Posterior vena cava (tissue), 2 donors: ENCODE measurements at regions of chr10 and their contacts with region 1.

Region 1: GRCh38 chr10:112177247-112177646 is 6.3 kb downstream of the GPAM start:
- DNase-seq: no peak

Region 2: DNA sequence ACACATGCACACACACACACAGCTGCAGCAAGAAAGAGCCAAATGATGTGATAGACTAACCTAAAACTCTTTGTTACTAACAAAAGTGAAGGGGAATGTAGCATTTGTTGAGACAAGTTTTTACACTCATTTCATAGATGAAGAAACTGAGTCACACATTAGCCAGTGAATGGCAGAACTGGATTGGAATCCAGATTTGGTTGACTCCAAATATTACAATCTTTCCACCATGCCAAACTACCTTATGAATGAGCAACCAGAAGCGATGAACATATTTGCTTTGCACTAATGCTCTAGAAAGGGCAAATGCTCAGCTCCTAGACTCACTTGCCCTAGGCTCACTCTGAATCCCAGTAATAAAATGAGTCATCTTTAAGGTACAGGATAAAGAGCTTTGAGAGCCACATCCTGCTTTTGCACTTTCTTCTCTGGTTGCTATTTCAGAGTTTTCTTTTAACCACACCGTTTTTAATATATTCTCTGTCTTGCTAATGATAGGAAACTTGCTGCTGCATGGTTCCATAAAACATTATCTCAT is 105.6 kb before region 1 on chr10:
- intact Hi-C with region 1: no loop called
- DNase-seq: no peak

Region 3: GRCh38 chr10:112442063-112442462 is 264.8 kb after region 1 on chr10:
- intact Hi-C with region 1: loop called in 1 of 2 experiments (anchors 5 kb)
- DNase-seq: no peak